Heart right ventricle (tissue), 16 donors: ENCODE measurements at regions of chr1 and their contacts with region 1.

Region 1: DNA sequence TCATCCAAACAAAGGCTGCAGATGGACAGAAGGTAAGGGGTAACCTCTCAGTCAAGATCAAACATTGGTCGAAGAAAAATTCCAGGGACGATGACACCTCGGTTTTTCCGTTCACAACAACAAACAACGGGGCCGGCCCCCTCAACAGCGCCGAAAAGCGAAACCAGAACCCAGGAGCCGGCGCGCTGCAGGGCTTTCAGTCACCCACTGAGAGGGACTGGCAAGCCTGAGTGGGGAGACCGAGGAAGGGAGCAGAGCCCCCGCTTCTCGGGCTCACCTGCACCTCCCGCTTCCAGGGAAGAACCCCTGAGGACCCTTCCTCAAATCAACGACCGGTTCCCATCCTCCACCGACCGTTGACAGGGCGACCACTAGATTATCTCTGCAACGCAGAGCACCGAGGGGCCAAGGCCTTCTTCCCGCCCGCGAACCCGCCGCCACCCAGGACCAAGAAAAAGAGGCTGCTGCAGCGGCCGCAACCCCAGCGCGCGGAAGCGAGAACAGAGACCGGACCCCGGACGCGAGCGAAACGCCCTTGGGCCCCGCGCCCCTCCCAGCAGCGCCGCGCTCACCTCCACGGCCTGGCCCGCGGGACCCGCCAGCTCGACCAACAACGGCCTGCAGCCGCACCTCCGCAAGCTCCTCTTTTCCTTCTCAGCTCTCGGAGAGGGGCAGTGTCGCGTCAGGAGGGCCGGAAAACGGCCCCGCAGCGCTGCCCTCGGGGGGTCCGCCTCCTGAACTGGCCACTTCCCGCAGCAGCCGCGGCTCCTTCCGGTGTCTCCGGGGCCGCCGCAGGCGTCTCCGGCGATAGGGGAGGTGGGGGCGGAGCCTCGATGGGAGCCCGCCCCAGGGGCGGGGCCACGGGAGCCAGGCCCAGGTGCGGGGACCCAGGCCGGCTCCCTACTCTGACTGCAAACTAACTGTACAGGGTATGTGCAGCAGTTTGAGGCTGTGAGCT is at the start of gene USP33:
- DNase-seq: peak; percentile 85 to 91
- ATAC-seq: peak; percentile 98 to 99 (median 98)
- H3K4me3 ChIP-seq: peak within 1 kb of the TSS; percentile 74 to 99 (median 92)
- H3K27ac ChIP-seq: peak within 1 kb of the TSS; percentile 69 to 95 (median 92)
- H3K4me1 ChIP-seq: peaks cover 0 to 48% (median 38%) of the 10 kb centered on the region in 9 donors
- H3K27me3 ChIP-seq: no peaks in the 10 kb centered on the region
- CTCF ChIP-seq: peak in 2 of 9 donors; percentile 2 to 17
- total RNA-seq, gene USP33: 22.6 to 34.5 (median 28.1) TPM

Region 2: GRCh38 chr1:77802026-77802425 is 42.7 kb after region 1 on chr1:
- intact Hi-C with region 1: loop called in 1 of 10 experiments (anchors 10 kb)
- DNase-seq: no peak
- ATAC-seq: no peak
- H3K4me3 ChIP-seq: no peak overlapping the region
- H3K27ac ChIP-seq: no peak overlapping the region
- H3K4me1 ChIP-seq: peaks cover 0 to 15% (median 0%) of the 10 kb centered on the region in 9 donors
- H3K27me3 ChIP-seq: no peaks in the 10 kb centered on the region
- CTCF ChIP-seq: no peak